Heart left ventricle (tissue), 16 donors: ENCODE measurements at regions of chr1 and their contacts with region 1.

Region 1: DNA sequence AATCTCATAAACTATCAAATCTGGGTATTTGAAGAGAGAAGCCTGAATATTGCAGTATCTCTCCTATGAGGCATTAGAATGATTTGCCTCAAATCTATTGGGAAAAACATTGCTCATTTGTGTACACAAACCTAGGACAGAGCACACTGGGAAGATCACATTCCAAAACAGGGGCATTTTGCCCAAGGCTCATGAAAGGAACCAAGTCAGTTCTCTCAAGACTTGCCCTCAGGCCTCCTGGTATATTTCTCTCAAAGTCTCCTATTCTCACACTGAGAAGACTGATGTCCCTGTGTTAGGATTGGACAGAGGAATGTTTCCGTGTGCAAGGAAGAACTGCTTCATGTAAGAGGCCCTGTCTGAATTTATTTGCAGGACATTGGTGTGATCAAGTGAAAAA is 30.2 kb upstream of the ALPL start:
- DNase-seq: no peak
- ATAC-seq: no peak
- H3K4me3 ChIP-seq: no peak overlapping the region
- H3K27ac ChIP-seq: no peak overlapping the region
- H3K4me1 ChIP-seq: no peaks in the 10 kb centered on the region
- H3K27me3 ChIP-seq: no peaks in the 10 kb centered on the region
- CTCF ChIP-seq: no peak
- POLR2A ChIP-seq: no peak

Region 2: GRCh38 chr1:20867847-20868246 is 611.1 kb before region 1 on chr1:
- intact Hi-C with region 1: no loop called
- DNase-seq: no peak
- ATAC-seq: no peak
- H3K4me3 ChIP-seq: no peak overlapping the region
- H3K27ac ChIP-seq: no peak overlapping the region
- H3K4me1 ChIP-seq: no peaks in the 10 kb centered on the region
- H3K27me3 ChIP-seq: no peaks in the 10 kb centered on the region
- CTCF ChIP-seq: no peak
- POLR2A ChIP-seq: no peak

Region 3: GRCh38 chr1:21072721-21073120 is 406.3 kb before region 1 on chr1:
- intact Hi-C with region 1: no loop called
- DNase-seq: no peak
- ATAC-seq: peak in 1 of 4 donors; percentile 37
- H3K4me3 ChIP-seq: no peak overlapping the region
- H3K27ac ChIP-seq: no peak overlapping the region
- H3K4me1 ChIP-seq: peaks cover 0 to 34% (median 5%) of the 10 kb centered on the region in 12 donors
- H3K27me3 ChIP-seq: no peaks in the 10 kb centered on the region
- CTCF ChIP-seq: peak in 2 of 12 donors; percentile 13 to 19
- POLR2A ChIP-seq: no peak

Region 4: DNA sequence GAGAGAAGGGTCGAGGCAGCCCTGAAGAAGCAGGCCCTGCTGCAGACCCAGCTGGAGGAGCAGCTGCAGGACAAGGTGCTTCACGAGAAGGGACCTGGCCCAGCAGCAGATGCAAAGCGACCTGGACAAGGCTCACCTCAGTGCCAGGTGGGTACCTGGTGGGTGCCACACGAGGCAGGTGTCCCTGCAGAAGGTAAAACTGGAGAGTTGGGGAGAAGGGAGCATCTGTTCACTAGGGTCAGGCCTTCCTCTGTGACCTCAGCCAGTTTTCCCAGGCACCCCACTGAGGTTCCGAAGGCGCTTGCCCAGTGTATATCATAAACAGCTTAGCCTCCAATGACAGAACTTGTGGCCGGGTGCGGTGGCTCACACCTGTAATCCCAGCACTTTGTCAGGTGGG is 44.6 kb before region 1 on chr1:
- intact Hi-C with region 1: loop called in 1 of 10 experiments (anchors 5 kb)
- DNase-seq: no peak
- ATAC-seq: no peak
- H3K4me3 ChIP-seq: no peak overlapping the region
- H3K27ac ChIP-seq: no peak overlapping the region
- H3K4me1 ChIP-seq: peaks cover 0 to 11% (median 0%) of the 10 kb centered on the region in 12 donors
- H3K27me3 ChIP-seq: peaks cover 0 to 7% (median 0%) of the 10 kb centered on the region in 9 donors
- CTCF ChIP-seq: no peak
- POLR2A ChIP-seq: no peak